T-cell (primary cell): ENCODE measurements at regions of chr1 and their contacts with region 1.

Region 1: GRCh38 chr1:185062710-185063370 is 17.5 kb downstream of the RNF2 start:
- DNase-seq: no peak
- ATAC-seq: no peak
- H3K4me3 ChIP-seq: no peak overlapping the region
- H3K4me3 Mint-ChIP-seq: no peak overlapping the region
- H3K27ac ChIP-seq: no peak overlapping the region
- H3K27ac Mint-ChIP-seq: no peak overlapping the region
- H3K4me1 ChIP-seq: peaks cover 2 to 5% of the 10 kb centered on the region in 2 experiments
- H3K4me1 Mint-ChIP-seq: peaks cover 80 to 87% (median 84%) of the 10 kb centered on the region in 3 donors
- H3K27me3 ChIP-seq: no peaks in the 10 kb centered on the region
- H3K27me3 Mint-ChIP-seq: no peaks in the 10 kb centered on the region

Region 2: GRCh38 chr1:184433956-184434502 is 628.8 kb before region 1 on chr1:
- CTCF ChIA-PET with region 1: no interaction called
- POLR2A ChIA-PET with region 1: no interaction called
- DNase-seq: no peak
- ATAC-seq: no peak
- H3K4me3 ChIP-seq: no peak overlapping the region
- H3K4me3 Mint-ChIP-seq: no peak overlapping the region
- H3K27ac ChIP-seq: no peak overlapping the region
- H3K27ac Mint-ChIP-seq: no peak overlapping the region
- H3K4me1 ChIP-seq: no peaks in the 10 kb centered on the region
- H3K4me1 Mint-ChIP-seq: no peaks in the 10 kb centered on the region
- H3K27me3 ChIP-seq: peaks cover 0 to 3% of the 10 kb centered on the region in 2 experiments
- H3K27me3 Mint-ChIP-seq: no peaks in the 10 kb centered on the region

Region 3: DNA sequence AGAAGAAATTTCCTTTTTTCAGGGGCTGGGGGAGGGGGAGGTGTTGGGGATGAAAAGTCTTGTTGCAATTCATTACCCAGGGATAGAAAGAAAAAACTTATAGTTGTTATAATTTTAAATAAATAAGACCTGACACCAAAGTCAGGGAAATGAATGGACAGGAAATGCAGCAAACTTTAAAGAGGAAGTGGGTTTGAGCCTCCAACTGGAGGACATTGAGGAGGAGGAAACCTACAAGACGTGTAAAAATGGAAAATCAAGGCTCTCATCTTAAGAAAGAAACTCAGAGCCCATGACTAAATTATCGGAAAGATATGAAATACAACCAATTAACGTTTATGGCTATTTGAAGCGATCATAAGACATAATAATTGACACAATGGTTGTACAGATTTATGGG is 142.9 kb before region 1 on chr1:
- CTCF ChIA-PET with region 1: no interaction called
- POLR2A ChIA-PET with region 1: no interaction called
- DNase-seq: no peak
- ATAC-seq: no peak
- H3K4me3 ChIP-seq: no peak overlapping the region
- H3K4me3 Mint-ChIP-seq: no peak overlapping the region
- H3K27ac ChIP-seq: no peak overlapping the region
- H3K27ac Mint-ChIP-seq: no peak overlapping the region
- H3K4me1 ChIP-seq: no peaks in the 10 kb centered on the region
- H3K4me1 Mint-ChIP-seq: peaks cover 4 to 34% (median 17%) of the 10 kb centered on the region in 3 donors
- H3K27me3 ChIP-seq: no peaks in the 10 kb centered on the region
- H3K27me3 Mint-ChIP-seq: no peaks in the 10 kb centered on the region

Region 4: DNA sequence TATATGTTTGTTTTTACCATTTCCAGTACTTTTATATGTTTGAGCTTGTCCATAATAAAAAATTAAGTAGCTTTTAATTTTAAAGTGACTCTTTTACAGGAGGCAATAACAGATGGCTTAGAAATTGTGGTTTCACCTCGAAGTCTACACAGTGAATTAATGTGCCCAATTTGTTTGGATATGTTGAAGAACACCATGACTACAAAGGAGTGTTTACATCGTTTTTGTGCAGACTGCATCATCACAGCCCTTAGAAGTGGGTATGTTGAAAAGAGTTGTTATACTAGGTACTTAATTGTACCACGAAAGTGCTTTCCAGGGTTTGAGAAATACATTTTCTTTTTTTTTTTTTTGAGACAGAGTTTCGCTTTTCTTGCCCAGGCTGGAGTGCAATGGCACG is 28.6 kb after region 1 on chr1:
- CTCF ChIA-PET with region 1: no interaction called
- POLR2A ChIA-PET with region 1: interaction called in 1 of 2 experiments, 13 read pairs
- DNase-seq: no peak
- ATAC-seq: no peak
- H3K4me3 ChIP-seq: no peak overlapping the region
- H3K4me3 Mint-ChIP-seq: no peak overlapping the region
- H3K27ac ChIP-seq: no peak overlapping the region
- H3K27ac Mint-ChIP-seq: no peak overlapping the region
- H3K4me1 ChIP-seq: no peaks in the 10 kb centered on the region
- H3K4me1 Mint-ChIP-seq: peaks cover under 1 to 1% (median 1%) of the 10 kb centered on the region in 3 donors
- H3K27me3 ChIP-seq: no peaks in the 10 kb centered on the region
- H3K27me3 Mint-ChIP-seq: no peaks in the 10 kb centered on the region